CD8-positive, alpha-beta T cell (primary cell): ENCODE measurements at regions of chr11 and their contacts with region 1.

Region 1: GRCh38 chr11:118907051-118908042 is 18.4 kb downstream of the BCL9L start:
- DNase-seq: peak; percentile 79 to 94 (median 87)
- ATAC-seq: peak; percentile 41
- H3K4me3 ChIP-seq: no peak overlapping the region
- H3K4me3 Mint-ChIP-seq: peak overlapping the region; percentile 53
- H3K27ac ChIP-seq: peak overlapping the region; percentile 2 to 61
- H3K27ac Mint-ChIP-seq: peak overlapping the region; percentile 92
- H3K4me1 ChIP-seq: peaks cover 58% of the 10 kb centered on the region
- H3K4me1 Mint-ChIP-seq: peaks cover 58% of the 10 kb centered on the region
- H3K27me3 ChIP-seq: no peaks in the 10 kb centered on the region
- H3K27me3 Mint-ChIP-seq: no peaks in the 10 kb centered on the region
- CTCF ChIP-seq: peak; percentile 91

Region 2: GRCh38 chr11:118660681-118661424 is 246.5 kb before region 1 on chr11:
- CTCF ChIA-PET with region 1: no interaction called
- POLR2A ChIA-PET with region 1: no interaction called
- intact Hi-C with region 1: no loop called
- DNase-seq: no peak
- ATAC-seq: no peak
- H3K4me3 ChIP-seq: no peak overlapping the region
- H3K4me3 Mint-ChIP-seq: no peak overlapping the region
- H3K27ac ChIP-seq: no peak overlapping the region
- H3K27ac Mint-ChIP-seq: no peak overlapping the region
- H3K4me1 ChIP-seq: peaks cover 12% of the 10 kb centered on the region
- H3K4me1 Mint-ChIP-seq: peaks cover 7% of the 10 kb centered on the region
- H3K27me3 ChIP-seq: no peaks in the 10 kb centered on the region
- H3K27me3 Mint-ChIP-seq: peaks cover 3% of the 10 kb centered on the region
- CTCF ChIP-seq: no peak

Region 3: GRCh38 chr11:118845369-118845768 is 62.0 kb before region 1 on chr11:
- CTCF ChIA-PET with region 1: no interaction called
- POLR2A ChIA-PET with region 1: no interaction called
- intact Hi-C with region 1: no loop called
- DNase-seq: no peak
- ATAC-seq: no peak
- H3K4me3 ChIP-seq: no peak overlapping the region
- H3K4me3 Mint-ChIP-seq: no peak overlapping the region
- H3K27ac ChIP-seq: no peak overlapping the region
- H3K27ac Mint-ChIP-seq: no peak overlapping the region
- H3K4me1 ChIP-seq: no peaks in the 10 kb centered on the region
- H3K4me1 Mint-ChIP-seq: peaks cover 25% of the 10 kb centered on the region
- H3K27me3 ChIP-seq: no peaks in the 10 kb centered on the region
- H3K27me3 Mint-ChIP-seq: no peaks in the 10 kb centered on the region
- CTCF ChIP-seq: no peak

Region 4: GRCh38 chr11:118889781-118890180 is 17.6 kb before region 1 on chr11:
- CTCF ChIA-PET with region 1: interaction called, 16 read pairs
- POLR2A ChIA-PET with region 1: interaction called, 37 read pairs
- intact Hi-C with region 1: no loop called
- DNase-seq: no peak
- ATAC-seq: no peak
- H3K4me3 ChIP-seq: no peak overlapping the region
- H3K4me3 Mint-ChIP-seq: peak overlapping the region; percentile 18
- H3K27ac ChIP-seq: no peak overlapping the region
- H3K27ac Mint-ChIP-seq: peak overlapping the region; percentile 85
- H3K4me1 ChIP-seq: peaks cover 77% of the 10 kb centered on the region
- H3K4me1 Mint-ChIP-seq: peaks cover 83% of the 10 kb centered on the region
- H3K27me3 ChIP-seq: no peaks in the 10 kb centered on the region
- H3K27me3 Mint-ChIP-seq: no peaks in the 10 kb centered on the region
- CTCF ChIP-seq: no peak